BJ (cell line): ENCODE measurements at regions of chr12 and their contacts with region 1.

Region 1: DNA sequence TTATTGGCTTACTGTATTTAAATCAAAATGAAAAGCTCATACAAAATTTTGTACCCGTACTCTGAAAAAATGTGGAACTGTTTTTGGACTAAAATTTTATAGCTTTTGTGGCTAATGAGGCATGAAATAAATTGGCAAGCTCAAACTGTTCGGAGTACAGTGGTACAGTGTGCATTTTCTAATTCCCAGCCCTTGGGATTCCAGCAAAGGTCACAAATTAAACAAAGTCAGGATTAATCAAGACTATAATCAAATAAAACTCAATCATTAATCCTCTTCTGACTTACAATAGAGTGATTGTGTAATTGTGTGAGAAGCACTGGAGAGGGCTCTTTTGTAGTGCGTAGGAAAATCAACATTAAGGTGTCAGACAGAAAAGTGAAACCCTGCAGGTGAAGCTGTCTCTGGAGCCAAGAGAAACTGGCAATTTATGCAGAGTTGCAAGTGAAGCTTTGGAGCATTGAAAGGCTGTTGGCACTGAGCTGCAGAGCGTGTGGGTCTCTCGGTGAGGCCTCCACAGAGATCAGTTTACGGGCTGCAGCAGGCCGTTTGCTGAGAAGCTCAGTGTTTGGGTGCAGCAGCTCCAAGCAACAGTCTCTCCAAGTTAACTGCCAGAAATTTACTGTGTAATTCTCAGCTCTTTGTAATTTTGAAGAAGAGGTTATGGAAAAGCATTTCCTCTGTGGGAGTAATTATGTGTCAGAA is 275.9 kb downstream of the FBXL14 start:
- DNase-seq: peak; percentile 29
- H3K4me3 ChIP-seq: no peak overlapping the region
- H3K27me3 ChIP-seq: no peaks in the 10 kb centered on the region
- CTCF ChIP-seq: no peak

Region 2: DNA sequence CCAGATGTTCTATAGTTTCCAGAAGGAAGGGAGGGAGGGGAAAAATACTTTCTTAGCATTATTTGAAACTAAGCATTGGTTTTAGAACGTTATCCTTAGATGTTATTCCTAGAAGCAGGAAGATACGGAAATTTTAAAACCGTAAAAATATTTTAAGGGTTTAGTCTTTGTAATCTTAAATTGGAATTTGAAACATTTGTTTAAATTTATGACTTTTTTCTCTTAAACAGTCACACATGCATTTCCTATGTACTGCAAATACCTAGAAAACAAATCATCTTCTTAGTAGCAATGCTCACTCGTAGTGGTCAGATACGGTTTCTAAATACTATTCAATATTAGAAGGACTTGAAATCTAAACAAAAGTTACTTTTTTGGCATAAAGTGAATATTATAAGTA is 45.4 kb before region 1 on chr12:
- CTCF ChIA-PET with region 1: no interaction called
- POLR2A ChIA-PET with region 1: interaction called, 18 read pairs
- DNase-seq: peak; percentile 19
- H3K4me3 ChIP-seq: no peak overlapping the region
- H3K27me3 ChIP-seq: no peaks in the 10 kb centered on the region
- CTCF ChIP-seq: no peak